Sciatic nerve (tissue), 2 donors: ENCODE measurements at regions of chrX and their contacts with region 1.

Region 1: DNA sequence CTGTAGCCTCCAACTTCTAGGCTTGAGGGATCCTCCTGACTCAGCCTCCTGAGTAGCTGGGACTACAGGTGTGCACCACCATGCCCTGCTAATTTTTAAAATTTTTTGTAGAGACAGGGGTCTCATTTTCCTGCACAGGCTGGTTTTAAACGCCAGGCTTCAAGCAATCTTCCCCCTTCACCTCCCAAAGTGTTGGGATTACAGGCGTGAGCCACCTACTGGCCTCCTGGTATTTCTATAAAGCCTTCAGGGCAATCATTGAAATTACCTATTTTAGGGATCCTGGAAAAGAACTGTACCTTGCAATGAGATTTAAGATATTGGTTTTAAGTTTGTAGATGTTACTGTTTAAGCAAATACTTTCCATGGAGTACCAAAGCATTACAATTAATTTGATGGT is 13.5 kb upstream of the PLS3 start:
- DNase-seq: no peak
- ATAC-seq: no peak

Region 2: DNA sequence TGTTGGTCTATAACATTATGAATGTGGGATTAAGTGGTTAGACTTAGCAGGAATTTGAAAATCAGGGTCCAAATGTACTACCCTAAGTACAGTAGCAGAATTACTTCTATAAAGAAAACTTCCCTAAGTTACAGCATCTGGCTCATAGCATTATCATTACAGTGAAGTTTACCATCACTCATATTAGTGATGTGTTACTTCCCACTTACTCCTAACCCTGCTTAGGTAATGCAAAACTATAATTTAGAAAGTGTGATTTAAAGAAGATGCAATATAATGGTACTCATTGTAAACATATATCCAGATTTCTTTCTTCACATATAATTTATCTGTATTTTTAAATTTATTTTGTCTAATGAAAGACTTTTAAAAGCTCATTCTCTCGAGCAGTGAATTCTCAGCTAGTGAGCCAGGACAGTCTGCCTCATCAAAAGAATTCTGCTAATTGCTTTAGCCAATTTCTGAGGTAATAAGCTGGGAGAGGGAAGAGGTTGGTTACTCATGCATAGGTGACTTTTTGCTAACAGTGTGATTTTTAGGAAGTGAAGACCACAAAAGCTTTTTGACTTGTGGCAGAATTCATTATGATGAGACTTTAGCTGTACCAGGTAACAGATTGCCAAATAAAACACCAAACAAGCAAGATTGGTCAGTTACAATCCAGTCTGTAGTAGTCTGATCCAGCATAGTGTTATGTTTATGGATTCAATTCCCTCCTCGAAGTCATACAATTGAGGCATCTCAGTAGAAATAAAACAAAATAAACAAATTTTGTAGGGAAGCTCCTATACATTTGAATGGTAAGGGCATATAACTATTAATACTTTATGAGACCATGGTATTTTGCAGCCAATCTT is 34.5 kb after region 1 on chrX:
- intact Hi-C with region 1: loop called (anchors 2 kb)
- DNase-seq: no peak
- ATAC-seq: peak; percentile 70